HEK293T (cell line): ENCODE measurements at regions of chr1 and their contacts with region 1.

Region 1: DNA sequence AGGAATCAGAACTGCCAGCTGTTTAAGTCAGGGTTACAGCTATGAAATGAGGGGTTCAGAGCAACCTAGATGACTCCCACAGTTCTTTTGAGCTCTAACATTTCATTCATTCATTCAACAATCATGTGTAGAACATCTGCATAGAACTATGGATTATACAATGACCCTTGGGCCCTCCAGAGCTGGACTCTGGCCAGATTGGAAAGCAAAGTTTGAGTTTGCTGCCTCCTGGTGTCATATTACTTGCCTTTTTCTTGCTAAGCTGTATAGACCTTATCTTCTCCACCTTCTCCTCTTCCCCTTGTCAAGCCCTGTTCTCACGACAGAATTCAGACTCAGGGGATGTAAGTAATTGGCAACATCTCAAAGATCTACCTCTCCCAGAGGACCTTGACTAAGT is 4.0 kb downstream of the CASQ2 start:
- DNase-seq: peak; percentile 40

Region 2: DNA sequence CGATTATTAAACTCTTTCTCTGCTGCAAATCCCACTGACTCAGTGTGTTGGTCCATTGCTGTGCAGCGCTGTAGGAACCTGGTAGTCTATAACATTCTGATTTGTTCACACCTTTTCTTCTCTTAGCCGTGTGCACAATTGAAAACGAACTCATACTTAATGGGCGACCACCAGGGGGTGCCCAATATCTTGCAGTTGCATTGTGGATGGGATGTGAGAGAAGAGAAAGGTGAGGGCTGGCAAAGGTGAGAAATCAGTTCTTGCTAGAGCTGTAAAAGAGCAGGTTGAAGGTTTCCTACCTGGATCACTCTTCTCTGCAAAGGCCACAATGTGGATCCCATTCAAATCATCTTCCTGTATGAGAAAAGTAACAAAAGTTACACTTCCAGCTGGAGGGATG is 47.0 kb before region 1 on chr1:
- CTCF ChIA-PET with region 1: interaction called, 25 read pairs
- POLR2A ChIA-PET with region 1: no interaction called
- DNase-seq: peak; percentile 37

Region 3: GRCh38 chr1:115842948-115843347 is 78.4 kb after region 1 on chr1:
- CTCF ChIA-PET with region 1: no interaction called
- POLR2A ChIA-PET with region 1: no interaction called
- DNase-seq: no peak